ENCODE measurements at regions of chr16 and their contacts with region 1.

Region 1: DNA sequence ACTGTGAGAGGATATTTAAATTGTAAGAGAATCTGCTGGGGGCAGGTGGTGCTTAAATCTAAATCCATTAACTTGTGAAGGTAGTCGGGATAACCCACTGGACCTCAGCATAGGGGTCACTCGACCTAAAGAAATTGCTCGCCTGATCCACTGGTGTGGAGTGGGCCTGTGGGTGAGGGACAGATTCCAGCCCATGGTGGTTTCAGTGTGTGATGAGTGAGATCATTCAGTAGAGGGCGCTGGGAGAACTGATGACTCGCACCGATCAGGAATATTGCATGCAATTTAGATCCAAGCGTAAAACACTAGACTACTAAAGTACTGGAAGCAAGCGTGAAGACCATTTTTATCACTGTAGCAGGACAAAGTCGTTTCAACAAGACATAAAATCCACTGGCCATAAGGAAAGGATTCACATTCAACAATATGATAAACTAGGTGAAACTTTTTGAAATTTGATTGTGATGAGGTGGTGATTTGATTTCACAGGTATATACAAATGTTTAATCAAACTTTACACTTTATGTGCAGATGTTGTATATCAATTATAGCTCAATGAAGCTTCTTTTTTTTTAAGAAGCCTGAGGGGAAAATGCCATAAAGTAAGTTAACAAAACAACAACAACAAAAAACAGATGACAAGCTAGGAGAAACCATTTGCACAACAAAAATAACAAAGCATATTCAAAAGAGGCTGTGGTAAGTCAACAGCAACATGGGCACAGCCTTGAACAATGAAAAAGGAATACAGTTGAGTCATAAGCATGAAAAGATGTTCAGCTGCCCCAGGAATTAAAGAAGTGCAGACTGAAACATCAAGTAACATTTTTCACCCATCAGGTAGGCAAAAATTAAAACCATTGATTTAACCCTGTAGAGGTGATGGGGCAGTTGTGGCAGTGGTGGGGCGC is 7.5 kb upstream of the TMEM170A start:
- DNase-seq: no peak
- H3K4me3 ChIP-seq: no peak overlapping the region
- H3K27ac ChIP-seq: no peak overlapping the region
- H3K4me1 ChIP-seq: no peaks in the 10 kb centered on the region
- H3K27me3 ChIP-seq: no peaks in the 10 kb centered on the region
- CTCF ChIP-seq: peak; percentile 74 to 81 (median 77)
- EP300 ChIP-seq: no peak
- POLR2A ChIP-seq: no peak

Region 2: DNA sequence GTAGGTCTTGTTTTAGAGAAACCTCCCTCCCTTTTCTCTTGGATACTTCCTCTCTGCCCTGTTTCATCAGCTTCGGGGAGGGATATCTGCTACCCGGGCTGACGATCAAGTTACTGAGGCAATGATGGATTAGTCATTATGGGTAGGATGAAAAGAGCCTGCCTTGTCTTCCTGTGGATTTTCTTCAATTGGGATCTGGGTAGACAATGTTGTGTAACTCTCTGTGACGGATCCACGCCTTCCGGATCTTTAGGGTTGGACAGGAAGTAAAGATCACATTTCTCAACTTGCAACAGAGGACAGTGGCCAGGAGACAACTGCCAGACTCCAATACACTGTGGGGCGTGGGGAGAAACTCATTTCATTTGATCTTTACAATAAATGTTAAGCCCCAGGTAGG is 34.6 kb after region 1 on chr16:
- intact Hi-C with region 1: no loop called
- DNase-seq: no peak
- H3K4me3 ChIP-seq: no peak overlapping the region
- H3K27ac ChIP-seq: no peak overlapping the region
- H3K4me1 ChIP-seq: peaks cover 3 to 19% (median 9%) of the 10 kb centered on the region in 4 donors
- H3K27me3 ChIP-seq: no peaks in the 10 kb centered on the region
- CTCF ChIP-seq: no peak
- EP300 ChIP-seq: no peak
- POLR2A ChIP-seq: no peak

Region 3: DNA sequence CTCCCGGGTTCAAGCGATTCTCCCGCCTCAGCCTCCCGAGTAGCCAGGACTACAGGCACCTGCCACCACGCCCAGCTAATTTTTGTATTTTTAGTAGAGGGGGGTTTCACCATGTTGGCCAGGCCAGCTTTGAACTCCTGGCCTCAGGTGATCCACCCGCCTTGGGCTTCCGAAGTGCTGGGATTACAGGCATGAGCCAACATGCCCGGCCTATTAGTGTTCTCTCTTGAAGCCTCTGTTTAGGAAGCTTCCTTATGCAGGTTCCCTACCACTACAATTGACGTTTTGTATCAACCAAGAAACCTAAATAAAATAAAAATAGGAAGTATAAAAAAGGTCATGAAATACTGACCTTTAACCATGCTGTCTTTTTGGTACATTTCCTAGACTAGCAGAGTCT is 47.9 kb after region 1 on chr16:
- intact Hi-C with region 1: loop called (anchors 2 kb)
- DNase-seq: no peak
- H3K4me3 ChIP-seq: no peak overlapping the region
- H3K27ac ChIP-seq: no peak overlapping the region
- H3K4me1 ChIP-seq: peaks cover 4 to 15% (median 12%) of the 10 kb centered on the region in 4 donors
- H3K27me3 ChIP-seq: no peaks in the 10 kb centered on the region
- CTCF ChIP-seq: no peak
- EP300 ChIP-seq: no peak
- POLR2A ChIP-seq: no peak

Region 4: GRCh38 chr16:75593825-75594820 is 122.1 kb after region 1 on chr16:
- intact Hi-C with region 1: loop called (anchors 10 kb)
- DNase-seq: no peak
- H3K4me3 ChIP-seq: no peak overlapping the region
- H3K27ac ChIP-seq: peak overlapping the region in 1 of 4 donors; percentile 4
- H3K4me1 ChIP-seq: peaks cover 20 to 32% (median 31%) of the 10 kb centered on the region in 4 donors
- H3K27me3 ChIP-seq: no peaks in the 10 kb centered on the region
- CTCF ChIP-seq: no peak
- EP300 ChIP-seq: no peak
- POLR2A ChIP-seq: no peak

Region 5: GRCh38 chr16:75622761-75623605 is 151.0 kb after region 1 on chr16 and contains the start of gene ADAT1:
- intact Hi-C with region 1: loop called (anchors 10 kb)
- DNase-seq: peak; percentile 99
- H3K4me3 ChIP-seq: peak within 1 kb of the TSS; percentile 65 to 82 (median 74)
- H3K27ac ChIP-seq: peak within 1 kb of the TSS; percentile 82 to 97 (median 90)
- H3K4me1 ChIP-seq: peaks cover 14 to 32% (median 19%) of the 10 kb centered on the region in 4 donors
- H3K27me3 ChIP-seq: no peaks in the 10 kb centered on the region
- CTCF ChIP-seq: peak in 1 of 3 experiments; percentile 37
- EP300 ChIP-seq: no peak
- POLR2A ChIP-seq: peak; percentile 74
- total RNA-seq, gene ADAT1: 17.0 to 33.6 (median 22.7) TPM

Region 6: DNA sequence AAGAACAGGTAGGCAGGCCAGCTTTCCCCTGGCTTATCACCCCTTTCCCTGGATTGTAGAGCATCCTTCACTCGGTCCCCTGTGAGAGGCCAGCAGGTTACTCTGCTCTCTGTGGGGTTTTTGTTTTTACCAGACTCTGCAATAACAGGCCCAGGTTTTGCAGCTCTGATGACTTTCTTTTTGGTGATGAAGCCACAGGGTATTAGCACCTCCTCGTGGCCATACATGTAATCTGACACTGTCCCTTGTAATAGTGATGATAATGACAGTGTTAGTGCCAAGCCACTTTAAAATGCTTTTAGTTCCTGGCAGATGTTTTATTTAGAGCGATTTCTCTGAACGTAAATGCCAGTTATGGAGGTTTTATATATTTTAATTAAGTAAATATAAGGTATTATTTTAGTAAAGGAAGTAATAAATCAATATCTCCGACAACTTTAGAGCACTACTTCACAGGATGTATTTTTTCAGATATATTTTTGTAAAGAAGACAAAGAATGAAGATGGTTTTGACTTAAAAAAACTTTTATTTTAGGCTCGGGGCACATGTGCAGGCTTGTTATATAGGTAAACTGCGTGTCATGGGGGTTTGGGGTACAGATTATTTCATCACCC is 292.3 kb after region 1 on chr16:
- intact Hi-C with region 1: loop called (anchors 5 kb)
- DNase-seq: no peak
- H3K4me3 ChIP-seq: no peak overlapping the region
- H3K27ac ChIP-seq: peak overlapping the region in 1 of 4 donors; percentile 20
- H3K4me1 ChIP-seq: peaks cover 0 to 7% (median 5%) of the 10 kb centered on the region in 4 donors
- H3K27me3 ChIP-seq: no peaks in the 10 kb centered on the region
- CTCF ChIP-seq: peak; percentile 77 to 82 (median 78)
- EP300 ChIP-seq: no peak
- POLR2A ChIP-seq: no peak